ENCODE measurements at regions of chr9 and their contacts with region 1.

Region 1: DNA sequence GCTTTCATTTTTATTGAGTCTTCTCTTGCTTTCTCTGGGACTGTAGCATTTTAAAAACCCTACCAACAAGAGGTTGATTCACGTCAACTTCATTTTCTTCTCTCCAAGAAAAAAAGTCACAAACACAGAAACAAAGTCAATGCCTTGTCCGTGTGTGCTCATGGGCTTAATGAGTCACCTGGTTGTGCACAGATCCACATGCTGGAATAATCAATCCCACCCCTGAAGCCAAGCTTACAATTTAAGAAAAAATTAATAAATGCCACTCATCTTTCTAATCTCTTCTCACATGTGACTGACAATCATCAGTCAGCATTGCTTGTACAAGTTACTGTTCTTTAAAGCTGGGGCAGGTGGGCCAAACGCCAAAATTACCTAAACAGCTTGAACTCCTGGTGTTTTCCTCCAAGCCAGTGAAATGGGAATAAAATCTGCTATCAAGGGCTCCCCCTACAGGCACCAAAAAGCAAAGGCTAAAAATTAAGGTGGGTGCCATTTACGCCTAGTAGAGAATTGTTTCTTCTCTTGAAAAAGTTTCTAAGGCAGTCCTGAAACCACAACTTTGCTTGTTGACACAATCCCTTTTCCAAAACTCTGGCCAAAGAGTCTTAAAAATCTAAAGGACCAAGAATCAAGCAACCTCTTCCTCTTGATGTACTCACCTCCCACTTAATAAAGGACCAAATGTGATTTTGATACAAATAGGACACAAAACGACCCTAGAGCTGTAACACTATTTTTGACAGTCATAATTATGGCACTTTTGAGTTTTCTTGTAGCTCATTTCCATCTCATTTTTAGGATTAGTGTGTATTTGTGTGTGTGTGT is 21.3 kb downstream of the TRMO start:
- DNase-seq: no peak
- ATAC-seq: no peak
- H3K4me3 ChIP-seq: no peak overlapping the region
- H3K27ac ChIP-seq: no peak overlapping the region
- H3K4me1 ChIP-seq: peaks cover 0 to 4% of the 10 kb centered on the region in 2 donors
- H3K27me3 ChIP-seq: no peaks in the 10 kb centered on the region
- CTCF ChIP-seq: peak; percentile 34 to 69 (median 57)
- POLR2A ChIP-seq: no peak

Region 2: GRCh38 chr9:97703437-97704344 is 197.3 kb before region 1 on chr9:
- in situ Hi-C with region 1: loop called in 1 of 4 experiments (anchors 10 kb)
- intact Hi-C with region 1: no loop called
- DNase-seq: no peak
- ATAC-seq: no peak
- H3K4me3 ChIP-seq: no peak overlapping the region
- H3K27ac ChIP-seq: no peak overlapping the region
- H3K4me1 ChIP-seq: no peaks in the 10 kb centered on the region
- H3K27me3 ChIP-seq: no peaks in the 10 kb centered on the region
- CTCF ChIP-seq: no peak
- POLR2A ChIP-seq: no peak

Region 3: DNA sequence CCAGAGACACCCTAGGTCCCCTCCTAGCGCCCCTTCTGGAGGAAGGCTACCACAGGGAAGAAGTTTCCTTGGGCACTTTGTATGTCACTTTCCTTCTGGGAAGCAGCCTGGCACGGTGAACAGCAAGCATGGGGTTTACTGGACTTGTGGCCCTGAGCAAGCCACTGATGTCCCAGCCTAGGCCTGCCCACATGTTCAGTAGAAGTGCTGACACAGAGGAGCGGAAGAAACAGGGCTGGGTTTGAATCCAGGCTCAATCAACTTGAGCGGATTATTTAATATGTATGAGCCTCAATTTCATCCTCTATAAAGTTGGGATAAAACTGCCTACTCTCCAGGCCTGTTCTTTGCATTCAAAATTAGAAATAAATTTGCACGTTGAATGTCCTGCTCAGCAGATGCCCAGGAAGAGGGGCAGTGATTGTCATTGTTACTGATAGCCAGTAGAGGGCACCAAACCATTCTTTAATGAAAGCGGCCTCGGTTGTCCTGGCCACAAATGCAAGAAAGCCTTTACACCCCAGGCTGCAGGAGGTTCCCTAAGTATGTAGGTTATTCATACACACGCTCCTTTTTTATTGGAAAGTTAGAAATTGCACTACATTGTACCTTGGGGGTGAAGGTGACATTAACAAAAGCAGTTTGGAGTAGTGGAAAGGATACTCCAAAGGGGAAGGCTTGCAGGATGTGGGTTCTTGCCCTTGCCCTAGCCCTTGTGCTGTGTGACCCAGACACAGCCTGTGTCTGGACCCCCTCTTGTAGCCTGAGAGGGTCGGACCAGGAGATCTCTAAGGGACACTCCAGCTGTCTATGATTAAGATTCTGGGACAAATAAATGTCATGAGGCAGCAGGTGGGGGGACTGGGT is 190.4 kb before region 1 on chr9:
- in situ Hi-C with region 1: loop called (anchors 5 to 10 kb)
- intact Hi-C with region 1: loop called (anchors 1 kb)
- DNase-seq: peak in 1 of 2 donors; percentile 19
- ATAC-seq: peak; percentile 80 to 94
- H3K4me3 ChIP-seq: no peak overlapping the region
- H3K27ac ChIP-seq: no peak overlapping the region
- H3K4me1 ChIP-seq: peaks cover 0 to 5% of the 10 kb centered on the region in 2 donors
- H3K27me3 ChIP-seq: no peaks in the 10 kb centered on the region
- CTCF ChIP-seq: peak; percentile 52 to 84 (median 75)
- POLR2A ChIP-seq: no peak

Region 4: DNA sequence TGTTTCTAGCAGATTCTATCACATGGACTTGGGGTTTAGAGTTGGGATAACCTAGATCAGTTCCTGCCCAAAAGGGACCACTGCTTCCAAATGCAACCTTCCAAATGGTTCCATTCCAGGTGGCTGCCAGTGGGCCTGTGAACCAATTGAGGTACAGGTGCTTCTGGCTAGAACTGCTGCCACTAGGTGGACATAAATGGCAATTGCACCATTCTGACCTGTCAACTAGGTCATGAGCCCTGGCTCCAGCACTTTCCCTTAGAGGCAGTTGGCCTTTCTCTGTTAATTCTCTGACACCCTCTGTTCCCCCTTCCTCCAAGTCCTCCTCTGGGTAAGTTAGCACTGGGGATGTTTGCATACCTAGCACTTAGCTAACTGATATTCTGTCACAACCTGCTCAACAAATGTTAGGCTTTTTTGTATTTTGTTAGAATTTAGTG is 53.6 kb after region 1 on chr9:
- in situ Hi-C with region 1: no loop called
- intact Hi-C with region 1: no loop called
- DNase-seq: peak in 1 of 2 donors; percentile 4
- ATAC-seq: peak; percentile 69
- H3K4me3 ChIP-seq: no peak overlapping the region
- H3K27ac ChIP-seq: no peak overlapping the region
- H3K4me1 ChIP-seq: no peaks in the 10 kb centered on the region
- H3K27me3 ChIP-seq: no peaks in the 10 kb centered on the region
- CTCF ChIP-seq: peak in 3 of 5 experiments; percentile 22 to 57 (median 43)
- POLR2A ChIP-seq: no peak

Region 5: DNA sequence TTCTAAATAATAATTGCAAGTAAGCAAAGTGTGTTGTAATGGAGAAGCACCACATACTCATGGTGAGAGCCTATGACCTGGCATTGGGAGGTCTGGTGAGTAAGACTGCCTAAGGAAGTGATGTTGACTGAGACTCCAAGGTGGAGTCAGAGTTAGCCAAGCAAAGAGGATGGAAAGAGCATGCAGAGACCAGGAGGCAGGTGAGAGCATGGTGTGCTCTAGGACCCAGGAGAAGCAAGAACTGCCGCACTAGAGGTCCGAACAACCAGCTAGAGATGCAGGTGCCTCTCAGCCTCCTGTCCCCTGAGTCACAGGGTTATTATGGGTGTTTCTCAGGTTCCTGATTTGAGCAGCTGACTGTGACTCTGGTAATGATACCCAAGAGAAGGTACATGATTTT is 109.5 kb after region 1 on chr9:
- in situ Hi-C with region 1: no loop called
- intact Hi-C with region 1: no loop called
- DNase-seq: peak; percentile 45 to 70
- ATAC-seq: peak; percentile 88 to 96
- H3K4me3 ChIP-seq: no peak overlapping the region
- H3K27ac ChIP-seq: peak overlapping the region; percentile 27 to 53 (median 42)
- H3K4me1 ChIP-seq: peaks cover 8 to 25% of the 10 kb centered on the region in 2 donors
- H3K27me3 ChIP-seq: no peaks in the 10 kb centered on the region
- CTCF ChIP-seq: no peak
- POLR2A ChIP-seq: no peak

Region 6: DNA sequence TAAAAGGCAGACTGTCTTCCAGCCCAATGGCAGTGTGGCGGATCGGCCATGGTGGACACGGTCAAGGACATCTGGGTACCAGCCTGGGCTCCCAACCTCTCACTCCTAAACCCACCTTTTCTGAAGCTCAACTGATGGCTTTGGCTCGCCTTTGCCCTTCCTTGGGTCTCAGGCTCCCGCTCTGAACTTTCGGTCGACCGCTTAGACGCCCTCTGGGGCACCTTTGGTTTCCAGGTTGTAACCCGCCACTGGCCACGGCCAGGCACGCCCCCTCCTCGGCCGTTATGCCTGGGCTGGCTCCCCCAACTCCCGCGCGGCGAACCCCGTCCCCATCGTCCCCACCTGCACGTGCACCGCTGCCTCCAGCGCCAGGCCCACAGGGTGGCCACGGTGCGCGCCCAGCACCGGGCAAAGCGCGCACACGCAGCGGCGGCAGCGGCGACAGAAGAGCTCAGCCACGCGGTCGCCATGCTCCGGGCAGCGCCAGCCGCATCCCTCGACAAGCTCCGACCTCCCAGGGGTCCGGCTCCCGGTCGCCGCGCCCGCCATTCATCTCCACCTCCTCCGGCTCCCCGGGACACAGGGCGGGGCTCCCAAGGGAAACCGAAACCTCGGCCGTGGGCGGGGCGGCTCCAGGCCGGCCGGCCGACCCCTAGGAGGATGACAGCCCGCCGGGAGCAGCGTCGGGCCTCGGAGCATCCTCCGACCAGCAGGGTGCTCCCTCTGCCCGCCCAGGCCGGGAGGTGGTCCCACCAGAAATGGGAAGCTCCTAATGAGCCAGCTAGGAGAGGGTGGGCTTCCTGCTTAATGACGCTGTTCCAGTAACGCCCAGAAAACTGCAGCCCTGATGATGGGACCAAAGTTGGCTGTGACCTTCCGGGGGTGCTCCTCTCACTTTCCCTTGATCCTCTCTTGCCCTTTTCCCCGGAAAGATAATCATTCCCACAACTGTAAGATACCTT is 218.0 kb after region 1 on chr9 and contains the start of gene TRIM14:
- in situ Hi-C with region 1: no loop called
- intact Hi-C with region 1: no loop called
- DNase-seq: no peak
- ATAC-seq: peak in 1 of 2 donors; percentile 33
- H3K4me3 ChIP-seq: peak within 1 kb of the TSS; percentile 60 to 89 (median 64)
- H3K27ac ChIP-seq: peak within 1 kb of the TSS in 3 of 4 donors; percentile 15 to 18 (median 16)
- H3K4me1 ChIP-seq: peaks cover 0 to 5% of the 10 kb centered on the region in 2 donors
- H3K27me3 ChIP-seq: peaks cover 0 to 3% (median 0%) of the 10 kb centered on the region in 3 donors
- CTCF ChIP-seq: no peak
- POLR2A ChIP-seq: no peak
- total RNA-seq, gene TRIM14: 1.1 to 3.2 (median 1.3) TPM